GM12878 (cell line): ENCODE measurements at regions of chr18 and their contacts with region 1.

Region 1: DNA sequence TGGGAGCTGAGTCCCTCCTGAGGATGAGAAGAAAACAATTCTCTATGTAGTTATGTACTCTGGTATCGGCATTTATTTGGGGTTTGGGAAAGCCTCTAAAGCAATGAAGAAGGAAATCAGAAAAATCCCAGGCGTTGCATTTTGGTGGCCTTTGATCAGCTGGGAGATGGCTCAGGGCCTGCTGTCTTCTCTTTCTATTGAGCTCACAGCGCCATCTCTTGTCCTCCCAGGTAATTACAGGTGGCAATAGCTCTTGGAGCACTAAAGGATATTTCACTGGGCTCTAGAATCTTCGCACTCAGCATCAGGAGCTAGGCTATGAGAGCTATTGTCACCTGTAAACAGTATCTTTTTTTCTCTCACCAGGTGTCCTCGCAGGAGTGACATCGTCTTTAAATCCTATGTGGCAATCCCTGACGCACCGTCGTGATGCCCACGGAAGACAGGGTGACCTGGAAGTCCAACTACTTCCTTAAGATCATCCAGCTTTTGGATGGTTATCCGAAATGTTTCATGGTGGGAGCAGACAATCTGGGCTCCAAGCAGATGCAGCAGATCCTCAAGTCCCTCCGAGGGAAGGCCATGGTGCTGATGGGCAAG is 76.1 kb upstream of the PMAIP1 start:
- DNase-seq: no peak
- ATAC-seq: peak; percentile 92
- H3K4me3 ChIP-seq: no peak overlapping the region
- H3K27ac ChIP-seq: no peak overlapping the region
- H3K4me1 ChIP-seq: no peaks in the 10 kb centered on the region
- H3K27me3 ChIP-seq: no peaks in the 10 kb centered on the region
- CTCF ChIP-seq: peak; percentile 80 to 87 (median 86)
- EP300 ChIP-seq: no peak
- POLR2A ChIP-seq: no peak
- RAD21 ChIP-seq: peak; percentile 91

Region 2: DNA sequence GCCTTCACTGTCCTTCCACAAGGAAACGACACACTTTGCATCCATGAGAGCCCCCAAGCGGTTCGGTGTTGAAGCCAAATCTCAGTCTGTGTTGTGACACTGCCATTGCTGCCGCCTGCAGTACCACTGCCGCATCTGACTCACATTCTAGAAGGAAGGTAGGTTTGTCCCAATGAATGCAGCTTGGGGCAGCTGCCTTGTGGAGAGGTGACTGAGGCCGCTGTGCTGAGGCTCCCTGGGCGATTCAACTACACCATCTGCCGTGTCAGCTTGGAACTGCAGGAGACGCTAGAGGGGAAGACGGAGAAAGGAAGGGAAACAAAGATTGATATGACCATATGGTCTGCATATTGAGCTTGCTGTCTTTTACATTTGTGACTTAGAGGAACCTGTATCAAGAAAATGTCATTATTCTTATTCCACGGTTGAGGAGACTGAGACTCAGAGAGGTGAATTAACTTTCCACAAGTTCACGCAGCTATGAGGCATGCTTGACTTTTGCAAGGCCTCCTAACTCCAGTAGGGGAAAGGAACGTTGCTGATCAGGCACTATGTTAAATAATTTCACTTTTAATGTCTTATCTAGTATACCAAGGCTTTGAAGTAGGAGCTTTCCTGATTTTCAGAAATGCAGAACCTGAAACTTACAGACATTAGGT is 421.1 kb before region 1 on chr18:
- CTCF ChIA-PET with region 1: no interaction called
- POLR2A ChIA-PET with region 1: no interaction called
- RAD21 ChIA-PET with region 1: interaction called, 8 read pairs
- SMC1A ChIA-PET with region 1: interaction called, 10 read pairs
- in situ Hi-C with region 1: no loop called
- intact Hi-C with region 1: no loop called
- DNase-seq: peak; percentile 40
- ATAC-seq: peak; percentile 100
- H3K4me3 ChIP-seq: no peak overlapping the region
- H3K27ac ChIP-seq: no peak overlapping the region
- H3K4me1 ChIP-seq: no peaks in the 10 kb centered on the region
- H3K27me3 ChIP-seq: no peaks in the 10 kb centered on the region
- CTCF ChIP-seq: peak; percentile 89 to 97 (median 96)
- EP300 ChIP-seq: no peak
- POLR2A ChIP-seq: no peak
- RAD21 ChIP-seq: peak; percentile 97

Region 3: GRCh38 chr18:59631583-59632181 is 192.0 kb before region 1 on chr18:
- CTCF ChIA-PET with region 1: interaction called, 111 read pairs
- POLR2A ChIA-PET with region 1: no interaction called
- RAD21 ChIA-PET with region 1: interaction called, 32 read pairs
- SMC1A ChIA-PET with region 1: interaction called, 35 read pairs
- in situ Hi-C with region 1: no loop called
- intact Hi-C with region 1: loop called (anchors 2 kb)
- DNase-seq: no peak
- ATAC-seq: peak; percentile 66
- H3K4me3 ChIP-seq: no peak overlapping the region
- H3K27ac ChIP-seq: no peak overlapping the region
- H3K4me1 ChIP-seq: no peaks in the 10 kb centered on the region
- H3K27me3 ChIP-seq: no peaks in the 10 kb centered on the region; a peak in 3 of 4 replicates
- CTCF ChIP-seq: peak; percentile 53 to 65 (median 61)
- EP300 ChIP-seq: no peak
- POLR2A ChIP-seq: no peak
- RAD21 ChIP-seq: peak; percentile 52

Region 4: GRCh38 chr18:59760619-59761600 is 62.8 kb before region 1 on chr18:
- CTCF ChIA-PET with region 1: no interaction called
- POLR2A ChIA-PET with region 1: no interaction called
- RAD21 ChIA-PET with region 1: no interaction called
- SMC1A ChIA-PET with region 1: no interaction called
- in situ Hi-C with region 1: no loop called
- intact Hi-C with region 1: no loop called
- DNase-seq: no peak
- ATAC-seq: no peak
- H3K4me3 ChIP-seq: no peak overlapping the region
- H3K27ac ChIP-seq: no peak overlapping the region
- H3K4me1 ChIP-seq: no peaks in the 10 kb centered on the region
- H3K27me3 ChIP-seq: no peaks in the 10 kb centered on the region; a peak in 1 of 4 replicates
- CTCF ChIP-seq: no peak
- EP300 ChIP-seq: no peak
- POLR2A ChIP-seq: no peak
- RAD21 ChIP-seq: no peak

Region 5: DNA sequence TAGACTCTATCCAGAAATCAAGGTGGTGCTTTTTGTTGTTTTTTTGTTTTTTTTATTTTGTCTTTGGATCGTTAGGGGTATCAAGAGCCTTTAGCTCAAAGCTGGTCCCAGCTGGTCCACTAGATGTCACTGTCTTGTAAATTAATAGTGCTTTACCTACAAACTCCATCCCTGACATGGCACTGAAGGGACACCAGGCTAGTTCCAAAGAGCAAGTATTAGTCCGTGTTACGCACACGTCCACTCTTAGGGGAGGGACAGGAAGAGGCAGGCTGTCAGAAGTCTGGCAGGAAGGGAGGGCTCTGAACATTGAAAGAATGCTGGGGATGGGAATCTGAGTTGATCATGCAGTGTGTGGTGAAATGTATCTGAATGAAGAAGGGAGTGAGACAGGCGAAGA is 40.6 kb before region 1 on chr18:
- CTCF ChIA-PET with region 1: interaction called, 135 read pairs
- POLR2A ChIA-PET with region 1: no interaction called
- RAD21 ChIA-PET with region 1: interaction called, 89 read pairs
- SMC1A ChIA-PET with region 1: interaction called, 83 read pairs
- in situ Hi-C with region 1: no loop called
- intact Hi-C with region 1: loop called (anchors 1 kb)
- DNase-seq: peak; percentile 9
- ATAC-seq: peak; percentile 98
- H3K4me3 ChIP-seq: no peak overlapping the region
- H3K27ac ChIP-seq: no peak overlapping the region
- H3K4me1 ChIP-seq: no peaks in the 10 kb centered on the region
- H3K27me3 ChIP-seq: no peaks in the 10 kb centered on the region
- CTCF ChIP-seq: peak; percentile 63 to 71 (median 71); a peak in 5 of 6 replicates
- EP300 ChIP-seq: no peak
- POLR2A ChIP-seq: no peak
- RAD21 ChIP-seq: peak; percentile 81

Region 6: GRCh38 chr18:59802031-59802430 is 21.7 kb before region 1 on chr18:
- CTCF ChIA-PET with region 1: interaction called, 22 read pairs
- POLR2A ChIA-PET with region 1: no interaction called
- RAD21 ChIA-PET with region 1: interaction called, 8 read pairs
- SMC1A ChIA-PET with region 1: interaction called, 8 read pairs
- in situ Hi-C with region 1: no loop called
- intact Hi-C with region 1: no loop called
- DNase-seq: peak; percentile 13
- ATAC-seq: peak; percentile 83
- H3K4me3 ChIP-seq: no peak overlapping the region
- H3K27ac ChIP-seq: no peak overlapping the region
- H3K4me1 ChIP-seq: peaks cover 9% of the 10 kb centered on the region
- H3K27me3 ChIP-seq: no peaks in the 10 kb centered on the region
- CTCF ChIP-seq: no peak
- EP300 ChIP-seq: no peak
- POLR2A ChIP-seq: no peak
- RAD21 ChIP-seq: no peak

Region 7: DNA sequence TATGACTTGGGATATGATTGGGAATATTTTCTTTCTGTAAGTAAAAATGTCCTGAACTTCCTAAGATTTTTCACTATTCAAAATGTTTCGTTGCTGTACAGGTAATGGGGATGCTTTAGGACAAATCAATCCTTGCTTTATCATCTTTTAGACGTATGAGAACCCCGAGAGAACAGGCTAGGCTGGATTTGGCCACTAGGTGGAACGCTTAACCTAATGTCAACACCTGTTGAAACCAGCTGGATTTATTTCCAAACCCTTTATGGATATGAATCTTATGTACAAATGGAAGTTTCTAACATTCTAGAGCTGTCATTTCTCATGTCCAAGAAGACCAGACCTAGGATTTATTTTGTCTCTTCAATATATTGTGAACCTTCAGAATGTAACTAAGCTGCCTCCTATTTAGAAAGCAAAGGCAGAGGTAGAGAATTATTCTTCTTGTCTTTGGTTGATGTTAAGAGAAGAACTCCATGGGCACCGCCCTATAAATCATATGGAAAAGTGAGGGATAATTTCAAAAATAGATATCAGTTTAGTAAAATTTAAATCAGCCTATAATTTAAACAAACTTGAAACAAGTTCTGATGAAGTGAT is 172.8 kb after region 1 on chr18:
- CTCF ChIA-PET with region 1: interaction called, 20 read pairs
- POLR2A ChIA-PET with region 1: no interaction called
- RAD21 ChIA-PET with region 1: interaction called, 3 read pairs
- SMC1A ChIA-PET with region 1: interaction called, 12 read pairs
- in situ Hi-C with region 1: no loop called
- intact Hi-C with region 1: no loop called
- DNase-seq: no peak
- ATAC-seq: peak; percentile 85
- H3K4me3 ChIP-seq: no peak overlapping the region
- H3K27ac ChIP-seq: no peak overlapping the region
- H3K4me1 ChIP-seq: no peaks in the 10 kb centered on the region
- H3K27me3 ChIP-seq: no peaks in the 10 kb centered on the region
- CTCF ChIP-seq: peak; percentile 74 to 79 (median 75)
- EP300 ChIP-seq: no peak
- POLR2A ChIP-seq: no peak
- RAD21 ChIP-seq: peak; percentile 70